ENCODE measurements at regions of chr19 and their contacts with region 1.

Region 1: GRCh38 chr19:55407800-55408532 is 378 bp upstream of the UBE2S start:
- DNase-seq: peak; percentile 94 to 100 (median 96)
- ATAC-seq: peak; percentile 88
- H3K4me3 ChIP-seq: peak overlapping the region; percentile 64 to 70
- H3K4me3 Mint-ChIP-seq: peak overlapping the region; percentile 95
- H3K27ac ChIP-seq: peak overlapping the region; percentile 98 to 99
- H3K27ac Mint-ChIP-seq: peak overlapping the region; percentile 99
- H3K4me1 ChIP-seq: peaks cover 21% of the 10 kb centered on the region
- H3K4me1 Mint-ChIP-seq: peaks cover 27% of the 10 kb centered on the region
- H3K27me3 ChIP-seq: no peaks in the 10 kb centered on the region
- H3K27me3 Mint-ChIP-seq: no peaks in the 10 kb centered on the region
- CTCF ChIP-seq: no peak

Region 2: DNA sequence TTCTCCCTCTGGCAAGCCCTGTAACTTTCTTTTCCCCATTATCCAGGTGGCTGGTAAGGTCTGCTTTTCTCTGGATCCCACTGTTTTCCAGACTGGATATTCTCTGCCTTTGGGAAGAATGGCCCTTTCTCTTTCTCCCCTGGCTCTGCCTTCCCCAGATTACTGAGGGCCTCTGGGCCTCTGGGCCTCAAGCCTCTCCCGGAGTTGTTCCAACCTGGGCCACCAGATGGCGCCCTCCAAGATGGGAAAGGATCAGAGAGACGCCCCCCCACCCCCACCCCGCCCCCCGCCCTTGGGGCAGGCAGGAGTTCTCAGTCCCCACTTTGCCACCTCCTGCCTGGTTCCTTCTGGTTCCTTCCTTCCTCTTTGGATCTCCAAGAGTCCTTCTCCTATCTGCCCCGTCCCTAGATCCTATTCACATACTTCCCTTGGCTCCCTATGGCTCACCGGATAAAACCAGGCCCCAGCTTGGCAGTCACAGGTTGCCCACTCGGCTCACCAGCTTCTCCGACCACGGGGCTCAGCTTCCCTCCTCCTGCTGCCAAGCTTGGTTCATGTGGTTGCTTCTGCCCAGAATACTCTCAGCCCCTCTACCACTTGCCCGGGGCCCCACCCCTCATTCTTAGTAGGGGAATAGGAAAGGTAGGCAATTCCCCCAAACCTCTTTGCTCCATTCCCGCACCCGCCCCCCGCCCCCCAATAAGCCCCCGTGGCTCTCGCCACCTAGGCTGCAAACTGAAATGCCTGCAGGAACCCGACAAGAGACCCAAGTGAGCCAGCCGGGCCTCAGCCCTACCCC is 319.2 kb before region 1 on chr19:
- CTCF ChIA-PET with region 1: no interaction called
- POLR2A ChIA-PET with region 1: no interaction called
- intact Hi-C with region 1: loop called in 1 of 2 experiments (anchors 10 kb)
- DNase-seq: peak; percentile 50 to 85 (median 77)
- ATAC-seq: peak; percentile 64
- H3K4me3 ChIP-seq: no peak overlapping the region
- H3K4me3 Mint-ChIP-seq: peak overlapping the region; percentile 58
- H3K27ac ChIP-seq: no peak overlapping the region
- H3K27ac Mint-ChIP-seq: no peak overlapping the region
- H3K4me1 ChIP-seq: peaks cover 18% of the 10 kb centered on the region
- H3K4me1 Mint-ChIP-seq: peaks cover 16% of the 10 kb centered on the region
- H3K27me3 ChIP-seq: peaks cover 13 to 18% of the 10 kb centered on the region in 2 experiments
- H3K27me3 Mint-ChIP-seq: peaks cover 44% of the 10 kb centered on the region
- CTCF ChIP-seq: peak; percentile 83

Region 3: DNA sequence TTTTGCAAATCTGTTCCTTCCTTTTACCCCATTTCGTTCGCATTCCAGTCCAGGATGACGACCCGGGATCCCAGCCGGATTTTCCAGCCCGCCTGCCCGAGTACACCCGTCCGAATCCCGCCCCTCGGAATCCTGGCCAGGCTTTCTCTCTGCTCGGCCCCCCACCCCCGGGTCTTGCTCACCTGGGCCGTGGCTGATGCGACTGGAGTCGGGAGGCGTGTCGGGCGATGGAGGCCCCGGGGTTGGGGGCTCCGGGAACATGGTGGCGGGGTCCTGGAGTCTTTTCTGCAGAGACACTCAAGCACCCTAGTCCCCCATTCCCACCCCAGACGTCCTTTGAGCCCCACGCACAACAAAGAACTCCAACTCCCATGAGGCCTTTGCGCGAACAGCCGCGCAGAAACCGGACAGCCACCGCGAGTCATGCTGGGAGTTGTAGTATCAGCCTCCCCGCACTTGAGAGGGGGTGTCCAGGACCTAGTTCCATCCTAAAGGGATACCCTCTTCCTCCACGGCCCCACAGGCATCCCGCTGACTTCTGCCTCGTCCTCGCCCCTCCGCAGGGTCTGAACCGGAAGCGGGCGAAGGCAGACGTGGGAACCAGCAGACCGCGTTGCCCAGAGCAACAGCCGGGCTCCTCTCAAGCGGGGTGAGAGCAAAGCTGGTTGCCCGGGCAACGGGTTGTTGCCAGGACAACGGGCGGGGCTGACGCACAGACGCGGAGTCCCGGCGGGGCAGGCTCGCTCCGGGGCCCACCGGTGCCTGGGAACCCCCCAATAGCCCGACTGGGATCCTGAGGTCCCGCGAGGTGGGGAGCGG is 229.0 kb before region 1 on chr19:
- CTCF ChIA-PET with region 1: no interaction called
- POLR2A ChIA-PET with region 1: no interaction called
- intact Hi-C with region 1: loop called (anchors 1 kb)
- DNase-seq: peak; percentile 87 to 99 (median 96)
- ATAC-seq: peak; percentile 79
- H3K4me3 ChIP-seq: peak overlapping the region; percentile 39 to 44
- H3K4me3 Mint-ChIP-seq: peak overlapping the region; percentile 75
- H3K27ac ChIP-seq: peak overlapping the region; percentile 45 to 61
- H3K27ac Mint-ChIP-seq: peak overlapping the region; percentile 79
- H3K4me1 ChIP-seq: peaks cover 27% of the 10 kb centered on the region
- H3K4me1 Mint-ChIP-seq: peaks cover 23% of the 10 kb centered on the region
- H3K27me3 ChIP-seq: peaks cover 43 to 67% of the 10 kb centered on the region in 2 experiments
- H3K27me3 Mint-ChIP-seq: peaks cover 68% of the 10 kb centered on the region
- CTCF ChIP-seq: no peak

Region 4: GRCh38 chr19:55301459-55302317 is 106.3 kb before region 1 on chr19:
- CTCF ChIA-PET with region 1: interaction called, 7 read pairs
- POLR2A ChIA-PET with region 1: interaction called, 3 read pairs
- intact Hi-C with region 1: loop called in 1 of 2 experiments (anchors 1 kb)
- DNase-seq: peak; percentile 89 to 99 (median 94)
- ATAC-seq: peak; percentile 88
- H3K4me3 ChIP-seq: peak overlapping the region; percentile 46 to 83
- H3K4me3 Mint-ChIP-seq: peak overlapping the region; percentile 85
- H3K27ac ChIP-seq: peak overlapping the region; percentile 48 to 54
- H3K27ac Mint-ChIP-seq: peak overlapping the region; percentile 92
- H3K4me1 ChIP-seq: peaks cover 11% of the 10 kb centered on the region
- H3K4me1 Mint-ChIP-seq: peaks cover 12% of the 10 kb centered on the region
- H3K27me3 ChIP-seq: no peaks in the 10 kb centered on the region
- H3K27me3 Mint-ChIP-seq: no peaks in the 10 kb centered on the region
- CTCF ChIP-seq: peak; percentile 89

Region 5: DNA sequence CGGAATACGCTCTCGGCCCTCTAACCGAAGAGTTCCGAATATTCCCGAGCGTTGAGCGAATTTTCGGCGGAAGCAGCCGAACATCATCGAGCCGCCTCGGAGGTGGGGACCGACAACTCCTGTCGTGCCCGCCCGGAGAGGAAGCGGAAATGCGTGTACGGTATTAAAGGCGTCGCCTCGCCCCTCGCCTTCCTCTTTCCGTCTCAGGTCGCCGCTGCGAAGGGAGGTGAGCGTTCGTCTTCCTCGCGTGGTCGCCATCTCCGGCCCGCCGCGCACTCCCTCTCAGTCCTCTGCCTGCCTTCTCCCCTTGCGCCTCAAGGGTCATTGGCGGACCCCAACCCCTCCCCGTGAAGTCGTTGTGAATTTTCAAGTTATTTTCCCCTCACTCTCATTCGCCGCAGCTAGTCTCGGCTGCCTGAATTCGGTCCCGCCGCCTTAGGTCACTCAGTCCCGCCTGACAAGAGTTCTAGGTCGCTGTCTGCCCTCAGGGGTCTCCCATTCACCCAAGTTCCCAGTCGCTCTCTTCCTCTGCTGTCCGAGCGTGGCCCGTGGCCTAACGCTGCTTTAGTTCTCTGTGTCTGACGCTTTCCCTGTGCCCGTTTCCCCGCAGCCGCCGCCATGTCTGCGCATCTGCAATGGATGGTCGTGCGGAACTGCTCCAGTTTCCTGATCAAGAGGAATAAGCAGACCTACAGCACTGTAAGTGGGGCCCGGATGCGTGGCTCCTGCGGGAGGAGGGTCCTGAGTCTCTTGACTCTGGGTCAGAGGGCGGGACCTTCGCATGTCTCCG is 22.0 kb before region 1 on chr19 and contains the start of gene RPL28:
- CTCF ChIA-PET with region 1: interaction called, 5 read pairs
- POLR2A ChIA-PET with region 1: interaction called, 56 read pairs
- intact Hi-C with region 1: loop called (anchors 1 kb)
- DNase-seq: peak; percentile 97 to 99 (median 99)
- ATAC-seq: peak; percentile 80
- H3K4me3 ChIP-seq: peak within 1 kb of the TSS; percentile 75 to 94
- H3K4me3 Mint-ChIP-seq: peak within 1 kb of the TSS; percentile 100
- H3K27ac ChIP-seq: peak within 1 kb of the TSS; percentile 95 to 97
- H3K27ac Mint-ChIP-seq: peak within 1 kb of the TSS; percentile 100
- H3K4me1 ChIP-seq: peaks cover 59% of the 10 kb centered on the region
- H3K4me1 Mint-ChIP-seq: peaks cover 75% of the 10 kb centered on the region
- H3K27me3 ChIP-seq: no peaks in the 10 kb centered on the region
- H3K27me3 Mint-ChIP-seq: no peaks in the 10 kb centered on the region
- CTCF ChIP-seq: no peak
- total RNA-seq, gene RPL28: 4,227 to 4,270 TPM

Region 6: GRCh38 chr19:55461259-55461973 is 53.5 kb after region 1 on chr19 and contains the start of gene ISOC2:
- CTCF ChIA-PET with region 1: no interaction called
- POLR2A ChIA-PET with region 1: no interaction called
- intact Hi-C with region 1: loop called (anchors 1 kb)
- DNase-seq: peak; percentile 100
- ATAC-seq: peak; percentile 96
- H3K4me3 ChIP-seq: peak within 1 kb of the TSS; percentile 90 to 95
- H3K4me3 Mint-ChIP-seq: peak within 1 kb of the TSS; percentile 83
- H3K27ac ChIP-seq: peak within 1 kb of the TSS; percentile 70 to 87
- H3K27ac Mint-ChIP-seq: peak within 1 kb of the TSS; percentile 58
- H3K4me1 ChIP-seq: peaks cover 17% of the 10 kb centered on the region
- H3K4me1 Mint-ChIP-seq: peaks cover 19% of the 10 kb centered on the region
- H3K27me3 ChIP-seq: no peaks in the 10 kb centered on the region
- H3K27me3 Mint-ChIP-seq: no peaks in the 10 kb centered on the region
- CTCF ChIP-seq: no peak
- total RNA-seq, gene ISOC2: 1.5 to 2.1 TPM

Region 7: GRCh38 chr19:55599468-55600279 is 191.7 kb after region 1 on chr19 and contains the start of gene FIZ1:
- CTCF ChIA-PET with region 1: no interaction called
- POLR2A ChIA-PET with region 1: interaction called, 4 read pairs
- intact Hi-C with region 1: loop called in 1 of 2 experiments (anchors 1 kb)
- DNase-seq: peak; percentile 90 to 98 (median 95)
- ATAC-seq: peak; percentile 69
- H3K4me3 ChIP-seq: peak within 1 kb of the TSS; percentile 80 to 81
- H3K4me3 Mint-ChIP-seq: peak within 1 kb of the TSS; percentile 100
- H3K27ac ChIP-seq: peak within 1 kb of the TSS; percentile 75 to 95
- H3K27ac Mint-ChIP-seq: peak within 1 kb of the TSS; percentile 99
- H3K4me1 ChIP-seq: peaks cover 14% of the 10 kb centered on the region
- H3K4me1 Mint-ChIP-seq: peaks cover 29% of the 10 kb centered on the region
- H3K27me3 ChIP-seq: no peaks in the 10 kb centered on the region
- H3K27me3 Mint-ChIP-seq: no peaks in the 10 kb centered on the region
- CTCF ChIP-seq: no peak
- total RNA-seq, gene FIZ1: 6.7 to 8.4 TPM

Measured in CD8-positive, alpha-beta T cell (primary cell).